Dendritic cell treated with granulocyte-macrophage colony-stimulating factor and Interleukin-4, amounts not matched to agents 40 ng/mL and 50 ng/mL, for 4 days (primary cell): ENCODE measurements at regions of chr16 and their contacts with region 1.

Region 1: DNA sequence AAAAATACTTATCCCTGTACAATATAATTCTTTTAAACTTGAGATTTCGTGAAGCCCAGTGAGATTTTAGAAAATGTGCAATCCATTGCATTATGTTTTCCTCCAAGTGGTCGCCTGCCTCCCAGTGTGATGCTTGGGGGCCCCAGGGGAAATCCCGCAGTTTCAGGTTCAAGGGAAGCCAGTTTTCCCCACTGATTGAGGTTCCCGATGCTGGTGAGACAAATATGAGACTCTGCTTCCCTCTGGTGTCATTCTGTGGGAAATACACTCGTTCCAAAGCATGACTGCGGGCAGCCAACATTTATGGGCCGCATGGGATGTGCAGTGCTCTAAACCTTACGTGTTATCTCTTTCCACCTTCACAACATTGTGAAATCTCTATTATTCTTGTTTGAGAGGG is 200.8 kb downstream of the PRKCB start:
- H3K4me3 Mint-ChIP-seq: no peak overlapping the region
- H3K27ac Mint-ChIP-seq: no peak overlapping the region
- H3K4me1 Mint-ChIP-seq: peaks cover 22% of the 10 kb centered on the region
- H3K27me3 Mint-ChIP-seq: no peaks in the 10 kb centered on the region

Region 2: GRCh38 chr16:23729503-23730424 is 306.9 kb before region 1 on chr16:
- intact Hi-C with region 1: loop called (anchors 1 kb)
- H3K4me3 Mint-ChIP-seq: no peak overlapping the region
- H3K27ac Mint-ChIP-seq: no peak overlapping the region
- H3K4me1 Mint-ChIP-seq: peaks cover 11% of the 10 kb centered on the region
- H3K27me3 Mint-ChIP-seq: peaks cover 5% of the 10 kb centered on the region

Region 3: DNA sequence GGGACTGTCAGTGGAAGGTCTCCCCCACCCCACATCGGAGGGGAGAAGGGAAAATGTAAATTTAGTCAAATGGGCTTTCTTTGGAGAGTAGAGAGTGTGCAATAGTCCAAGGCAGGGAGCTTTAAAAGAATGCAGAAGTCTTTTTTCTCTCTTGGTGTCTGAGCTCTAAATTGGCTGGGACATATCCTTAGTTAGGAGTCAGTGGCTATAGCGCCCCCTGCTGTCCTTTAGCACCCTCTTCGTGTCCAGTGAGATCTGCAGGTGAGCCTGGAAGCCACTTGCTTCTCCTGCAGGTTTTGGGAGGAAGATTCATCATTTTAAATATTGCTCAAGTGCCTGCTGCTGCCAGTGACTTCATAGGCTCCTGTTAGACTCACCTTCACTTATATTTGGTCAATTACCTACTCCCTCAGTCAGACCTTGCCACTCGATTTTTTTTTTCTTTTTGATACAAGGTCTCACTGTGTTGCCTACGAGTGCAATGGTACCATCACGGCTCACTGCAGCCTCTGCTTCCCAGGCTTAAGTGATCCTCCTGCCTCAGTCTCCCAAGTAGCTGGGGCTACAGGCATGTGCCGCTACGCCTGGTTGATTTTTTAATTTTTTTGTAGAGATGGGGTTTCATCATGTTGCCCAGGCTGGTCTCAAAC is 26.0 kb before region 1 on chr16:
- intact Hi-C with region 1: loop called (anchors 2 kb)
- H3K4me3 Mint-ChIP-seq: no peak overlapping the region
- H3K27ac Mint-ChIP-seq: no peak overlapping the region
- H3K4me1 Mint-ChIP-seq: peaks cover 50% of the 10 kb centered on the region
- H3K27me3 Mint-ChIP-seq: no peaks in the 10 kb centered on the region

Region 4: DNA sequence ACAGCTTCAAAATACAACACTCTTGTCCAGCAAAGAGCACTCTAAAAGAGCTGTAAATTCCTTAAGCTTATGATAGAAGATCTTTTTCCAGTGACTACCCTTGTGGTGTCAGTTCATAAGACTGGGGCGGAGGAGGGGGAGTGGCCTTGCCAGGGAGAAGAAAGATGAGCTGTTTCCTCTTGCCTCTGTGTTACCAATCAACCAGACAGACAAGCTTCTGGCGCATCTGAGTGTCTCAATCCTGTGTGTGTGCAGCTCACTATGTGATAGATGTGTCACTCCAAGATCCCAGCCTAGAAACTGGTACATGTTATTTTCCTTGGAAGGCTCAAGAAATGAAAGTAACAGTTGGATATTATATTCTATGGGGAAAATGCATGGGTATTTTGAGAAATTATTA is 52.2 kb after region 1 on chr16:
- intact Hi-C with region 1: no loop called
- H3K4me3 Mint-ChIP-seq: no peak overlapping the region
- H3K27ac Mint-ChIP-seq: no peak overlapping the region
- H3K4me1 Mint-ChIP-seq: peaks cover 5% of the 10 kb centered on the region
- H3K27me3 Mint-ChIP-seq: no peaks in the 10 kb centered on the region

Region 5: GRCh38 chr16:24151482-24151939 is 114.9 kb after region 1 on chr16:
- intact Hi-C with region 1: no loop called
- H3K4me3 Mint-ChIP-seq: no peak overlapping the region
- H3K27ac Mint-ChIP-seq: no peak overlapping the region
- H3K4me1 Mint-ChIP-seq: peaks cover 5% of the 10 kb centered on the region
- H3K27me3 Mint-ChIP-seq: no peaks in the 10 kb centered on the region